T-cell (primary cell): ENCODE measurements at regions of chr3 and their contacts with region 1.

Region 1: GRCh38 chr3:10041034-10041433 is 14.8 kb downstream of the FANCD2 start:
- DNase-seq: no peak
- ATAC-seq: no peak
- H3K4me3 ChIP-seq: no peak overlapping the region
- H3K4me3 Mint-ChIP-seq: no peak overlapping the region
- H3K27ac ChIP-seq: no peak overlapping the region
- H3K27ac Mint-ChIP-seq: no peak overlapping the region
- H3K4me1 ChIP-seq: no peaks in the 10 kb centered on the region
- H3K4me1 Mint-ChIP-seq: no peaks in the 10 kb centered on the region
- H3K27me3 ChIP-seq: no peaks in the 10 kb centered on the region
- H3K27me3 Mint-ChIP-seq: no peaks in the 10 kb centered on the region

Region 2: GRCh38 chr3:10149226-10149625 is 108.2 kb after region 1 on chr3:
- CTCF ChIA-PET with region 1: interaction called in 1 of 2 experiments, 10 read pairs
- POLR2A ChIA-PET with region 1: no interaction called
- DNase-seq: no peak
- ATAC-seq: no peak
- H3K4me3 ChIP-seq: no peak overlapping the region
- H3K4me3 Mint-ChIP-seq: no peak overlapping the region
- H3K27ac ChIP-seq: no peak overlapping the region
- H3K27ac Mint-ChIP-seq: peak overlapping the region in 1 of 2 donors; percentile 44
- H3K4me1 ChIP-seq: peaks cover 10 to 25% of the 10 kb centered on the region in 2 experiments
- H3K4me1 Mint-ChIP-seq: peaks cover 17 to 29% (median 28%) of the 10 kb centered on the region in 3 donors
- H3K27me3 ChIP-seq: no peaks in the 10 kb centered on the region
- H3K27me3 Mint-ChIP-seq: no peaks in the 10 kb centered on the region